Thyroid gland (tissue), 4 donors: ENCODE measurements at regions of chr11 and their contacts with region 1.

Region 1: DNA sequence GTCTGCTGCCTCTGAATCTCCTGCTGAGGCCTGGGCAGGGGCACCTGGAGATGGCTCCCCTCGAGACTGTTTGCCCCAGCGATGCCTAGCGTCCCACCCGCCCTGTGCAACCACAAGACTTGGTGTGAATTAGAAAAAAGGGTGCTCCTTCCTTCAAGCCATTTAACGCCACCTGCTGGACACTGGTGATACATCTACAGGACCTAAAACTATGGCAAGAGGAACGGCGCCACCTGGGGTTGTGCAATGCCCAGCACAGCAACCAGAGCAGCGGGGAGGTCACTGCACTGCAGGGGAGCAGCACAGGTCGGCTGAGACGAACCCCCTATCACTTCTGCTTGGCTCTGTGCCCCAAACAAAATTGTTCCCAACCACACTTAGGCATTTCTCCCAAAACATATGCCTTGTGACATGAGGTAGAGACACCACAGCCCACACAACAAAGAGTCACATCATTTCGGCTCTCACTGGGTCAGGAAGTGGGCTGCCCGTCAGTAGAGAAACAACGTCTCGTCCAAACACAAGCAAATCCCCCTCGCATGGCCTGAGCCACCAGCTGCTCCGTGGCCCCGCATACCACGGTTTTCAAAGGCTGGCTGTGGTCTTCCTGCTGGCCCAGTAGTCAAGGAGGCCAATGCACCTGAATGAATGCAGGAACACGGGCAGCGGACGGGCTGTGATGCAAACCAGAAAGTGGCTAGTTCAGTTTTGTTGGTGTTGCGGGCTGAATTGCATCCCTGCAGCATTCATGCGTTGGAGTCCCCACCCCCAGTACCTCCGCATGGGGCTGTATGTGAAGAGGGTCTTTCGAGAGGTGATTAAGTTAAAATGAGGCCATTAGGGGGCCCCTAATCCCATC is 171.9 kb downstream of the SHANK2 start:
- DNase-seq: peak; percentile 86 to 92
- H3K4me3 ChIP-seq: no peak overlapping the region
- H3K27ac ChIP-seq: no peak overlapping the region
- H3K4me1 ChIP-seq: no peaks in the 10 kb centered on the region
- H3K27me3 ChIP-seq: no peaks in the 10 kb centered on the region
- CTCF ChIP-seq: peak in 5 of 6 experiments; percentile 18 to 96 (median 80)
- POLR2A ChIP-seq: no peak

Region 2: GRCh38 chr11:70818351-70818750 is 262.1 kb before region 1 on chr11:
- intact Hi-C with region 1: loop called (anchors 5 kb)
- DNase-seq: no peak
- H3K4me3 ChIP-seq: no peak overlapping the region
- H3K27ac ChIP-seq: no peak overlapping the region
- H3K4me1 ChIP-seq: peaks cover 0 to 5% of the 10 kb centered on the region in 2 donors
- H3K27me3 ChIP-seq: no peaks in the 10 kb centered on the region
- CTCF ChIP-seq: no peak
- POLR2A ChIP-seq: no peak

Region 3: DNA sequence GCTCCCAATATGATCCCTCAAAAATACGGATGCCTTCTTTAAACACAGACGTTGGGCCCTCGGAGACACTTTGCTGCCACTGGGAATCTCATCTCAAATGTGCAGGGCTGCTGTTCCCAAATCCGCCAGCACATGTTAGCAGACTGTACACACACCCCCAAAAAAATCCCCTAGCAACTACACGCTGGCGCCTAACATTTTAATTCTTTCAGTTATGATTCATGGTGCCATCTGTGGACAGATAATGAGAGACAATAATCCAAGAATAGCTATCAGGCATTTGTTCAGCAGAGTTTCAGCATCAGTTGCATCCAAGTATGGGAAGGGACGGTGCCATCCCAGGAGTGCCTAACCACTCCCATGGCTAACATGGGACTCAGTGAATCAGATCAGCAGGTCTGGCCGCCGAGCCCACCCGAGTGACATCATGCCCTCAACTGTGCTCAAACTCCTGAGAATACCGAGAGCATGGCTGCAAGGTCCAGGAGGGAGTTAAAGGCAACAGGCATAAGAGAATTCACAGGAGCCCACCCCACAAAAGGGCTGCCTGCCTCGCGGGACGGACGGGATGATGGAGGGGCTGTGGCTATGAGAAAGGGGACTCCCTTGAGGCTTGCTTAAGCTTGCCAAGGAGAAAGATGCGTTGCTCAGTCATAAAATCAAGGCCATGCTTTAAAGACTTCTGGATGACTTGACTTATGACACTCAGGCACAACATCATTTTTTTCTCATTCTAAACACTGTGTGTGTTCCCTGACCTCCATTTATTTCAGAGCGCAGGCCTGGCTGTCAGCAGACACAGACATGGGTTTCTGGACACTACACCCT is 165.1 kb before region 1 on chr11:
- intact Hi-C with region 1: no loop called
- DNase-seq: no peak
- H3K4me3 ChIP-seq: no peak overlapping the region
- H3K27ac ChIP-seq: no peak overlapping the region
- H3K4me1 ChIP-seq: no peaks in the 10 kb centered on the region
- H3K27me3 ChIP-seq: no peaks in the 10 kb centered on the region
- CTCF ChIP-seq: no peak
- POLR2A ChIP-seq: no peak